ENCODE measurements at regions of chr9 and their contacts with region 1.

Region 1: DNA sequence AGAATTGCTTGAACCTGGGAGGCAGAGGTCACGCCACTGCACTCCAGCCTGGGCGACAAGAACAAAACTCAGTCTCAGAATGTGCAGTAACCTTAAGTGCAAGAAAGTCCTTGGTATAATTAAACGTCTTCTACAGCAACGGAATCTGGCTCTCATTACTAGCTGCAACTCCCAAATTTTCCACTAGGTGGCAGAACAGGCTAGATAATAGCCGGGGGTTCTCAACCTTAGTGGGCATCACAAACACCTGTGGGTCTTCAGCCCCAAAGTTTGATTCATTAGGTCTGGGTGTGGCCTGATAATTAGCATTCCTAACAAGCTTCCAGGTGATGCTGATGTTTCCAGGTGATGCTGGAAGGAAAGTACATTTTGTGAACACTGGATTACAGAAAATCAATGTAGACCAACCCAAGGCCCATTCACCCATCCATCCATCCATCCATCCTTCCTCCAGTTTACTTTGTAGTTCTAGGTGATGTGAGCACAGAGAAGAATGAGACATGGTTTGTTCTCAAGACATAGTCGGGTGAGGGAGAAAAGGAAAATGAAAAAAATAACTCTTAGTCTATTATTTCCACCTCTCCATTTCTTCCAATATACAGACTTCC is 37.3 kb downstream of the FBXW2 start:
- DNase-seq: peak; percentile 71
- H3K4me3 Mint-ChIP-seq: no peak overlapping the region
- H3K27ac Mint-ChIP-seq: no peak overlapping the region
- H3K4me1 Mint-ChIP-seq: peaks cover 5% of the 10 kb centered on the region
- H3K27me3 Mint-ChIP-seq: no peaks in the 10 kb centered on the region
- CTCF ChIP-seq: peak; percentile 79

Region 2: GRCh38 chr9:120730661-120731514 is 25.0 kb before region 1 on chr9:
- CTCF ChIA-PET with region 1: interaction called, 17 read pairs
- POLR2A ChIA-PET with region 1: interaction called, 3 read pairs
- intact Hi-C with region 1: no loop called
- DNase-seq: peak; percentile 84
- H3K4me3 Mint-ChIP-seq: no peak overlapping the region
- H3K27ac Mint-ChIP-seq: peak overlapping the region; percentile 27
- H3K4me1 Mint-ChIP-seq: peaks cover 22% of the 10 kb centered on the region
- H3K27me3 Mint-ChIP-seq: no peaks in the 10 kb centered on the region
- CTCF ChIP-seq: no peak

Region 3: GRCh38 chr9:120767456-120768167 is 11.7 kb after region 1 on chr9:
- CTCF ChIA-PET with region 1: interaction called, 55 read pairs
- POLR2A ChIA-PET with region 1: interaction called, 3 read pairs
- intact Hi-C with region 1: no loop called
- DNase-seq: no peak
- H3K4me3 Mint-ChIP-seq: no peak overlapping the region
- H3K27ac Mint-ChIP-seq: no peak overlapping the region
- H3K4me1 Mint-ChIP-seq: no peaks in the 10 kb centered on the region
- H3K27me3 Mint-ChIP-seq: no peaks in the 10 kb centered on the region
- CTCF ChIP-seq: no peak

Region 4: GRCh38 chr9:120774722-120775121 is 18.8 kb after region 1 on chr9:
- CTCF ChIA-PET with region 1: interaction called, 55 read pairs
- POLR2A ChIA-PET with region 1: interaction called, 7 read pairs
- intact Hi-C with region 1: no loop called
- DNase-seq: no peak
- H3K4me3 Mint-ChIP-seq: no peak overlapping the region
- H3K27ac Mint-ChIP-seq: no peak overlapping the region
- H3K4me1 Mint-ChIP-seq: peaks cover 22% of the 10 kb centered on the region
- H3K27me3 Mint-ChIP-seq: no peaks in the 10 kb centered on the region
- CTCF ChIP-seq: no peak

Region 5: GRCh38 chr9:121059998-121060636 is 304.2 kb after region 1 on chr9:
- CTCF ChIA-PET with region 1: interaction called, 51 read pairs
- POLR2A ChIA-PET with region 1: interaction called, 5 read pairs
- intact Hi-C with region 1: loop called (anchors 1 kb)
- DNase-seq: peak; percentile 66
- H3K4me3 Mint-ChIP-seq: no peak overlapping the region
- H3K27ac Mint-ChIP-seq: no peak overlapping the region
- H3K4me1 Mint-ChIP-seq: no peaks in the 10 kb centered on the region
- H3K27me3 Mint-ChIP-seq: no peaks in the 10 kb centered on the region
- CTCF ChIP-seq: peak; percentile 53